ENCODE measurements at regions of chr20 and their contacts with region 1.

Region 1: GRCh38 chr20:53611449-53611894 is 17.8 kb upstream of the ZNF217 start:
- DNase-seq: peak in 2 of 14 experiments; percentile 47 to 48
- ATAC-seq: no peak
- H3K4me3 ChIP-seq: no peak overlapping the region
- H3K4me3 Mint-ChIP-seq: no peak overlapping the region
- H3K27ac ChIP-seq: peak overlapping the region in 1 of 2 donors; percentile 9
- H3K27ac Mint-ChIP-seq: peak overlapping the region; percentile 77
- H3K4me1 ChIP-seq: peaks cover 26% of the 10 kb centered on the region
- H3K4me1 Mint-ChIP-seq: peaks cover 40% of the 10 kb centered on the region
- H3K27me3 ChIP-seq: no peaks in the 10 kb centered on the region
- H3K27me3 Mint-ChIP-seq: no peaks in the 10 kb centered on the region
- CTCF ChIP-seq: no peak

Region 2: DNA sequence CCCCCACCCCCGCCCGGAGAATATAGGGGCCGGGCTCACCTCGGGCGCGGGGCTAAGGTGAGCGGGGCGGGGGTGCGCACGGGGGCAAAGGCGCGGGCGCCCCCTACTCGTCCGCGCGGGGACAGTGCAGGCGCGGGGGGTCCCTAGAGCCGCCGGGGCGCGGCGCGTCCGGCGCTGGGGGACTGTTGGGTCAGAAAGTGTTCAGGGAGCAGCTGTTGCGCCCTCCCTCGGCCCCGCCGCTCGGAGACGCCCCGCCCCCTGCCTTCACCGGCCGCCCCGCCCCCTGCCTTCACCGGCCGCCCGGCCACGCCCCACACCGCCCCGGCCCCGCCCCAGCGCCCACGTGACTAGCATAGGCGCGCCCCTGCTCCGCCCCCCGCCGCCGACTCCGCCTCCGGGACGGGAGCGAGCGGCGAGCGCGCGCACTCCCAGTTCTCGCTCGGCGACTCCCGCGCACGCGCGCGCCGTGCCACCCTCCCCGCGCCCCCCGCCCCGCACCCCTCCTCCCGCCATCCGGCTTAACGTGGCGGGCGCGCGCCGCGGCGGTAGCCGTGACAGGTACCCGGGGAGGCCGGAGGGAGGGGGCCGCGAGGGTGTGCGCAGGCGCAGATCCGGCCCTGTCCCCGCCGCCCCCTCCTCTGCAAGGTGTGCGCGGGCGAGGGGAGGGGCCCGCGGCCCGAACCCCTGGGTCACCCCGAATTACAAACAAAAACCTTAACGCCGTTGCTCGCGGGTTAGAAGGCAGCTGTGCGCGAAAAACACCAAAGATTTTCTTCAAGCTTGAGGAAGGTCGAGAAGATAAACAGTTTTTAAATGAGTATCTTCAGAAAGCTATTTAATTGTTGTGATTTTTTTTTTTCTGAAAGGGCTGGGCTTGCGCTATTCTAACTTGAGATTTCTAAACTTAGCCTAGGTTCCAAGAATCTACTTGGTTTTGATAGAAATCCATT is 17.1 kb before region 1 on chr20:
- CTCF ChIA-PET with region 1: interaction called, 3 read pairs
- POLR2A ChIA-PET with region 1: interaction called, 111 read pairs
- intact Hi-C with region 1: loop called in 1 of 2 experiments (anchors 1 kb)
- DNase-seq: peak; percentile 95 to 100 (median 98)
- ATAC-seq: peak; percentile 63
- H3K4me3 ChIP-seq: peak overlapping the region; percentile 75
- H3K4me3 Mint-ChIP-seq: peak overlapping the region; percentile 93
- H3K27ac ChIP-seq: peak overlapping the region; percentile 63 to 74
- H3K27ac Mint-ChIP-seq: peak overlapping the region; percentile 100
- H3K4me1 ChIP-seq: peaks cover 24% of the 10 kb centered on the region
- H3K4me1 Mint-ChIP-seq: peaks cover 73% of the 10 kb centered on the region
- H3K27me3 ChIP-seq: no peaks in the 10 kb centered on the region
- H3K27me3 Mint-ChIP-seq: no peaks in the 10 kb centered on the region
- CTCF ChIP-seq: no peak

Region 3: GRCh38 chr20:53643031-53643832 is 31.8 kb after region 1 on chr20:
- CTCF ChIA-PET with region 1: interaction called, 10 read pairs
- POLR2A ChIA-PET with region 1: interaction called, 61 read pairs
- intact Hi-C with region 1: loop called in 1 of 2 experiments (anchors 1 kb)
- DNase-seq: peak; percentile 54 to 88 (median 68)
- ATAC-seq: peak; percentile 96
- H3K4me3 ChIP-seq: peak overlapping the region; percentile 18
- H3K4me3 Mint-ChIP-seq: peak overlapping the region; percentile 84
- H3K27ac ChIP-seq: peak overlapping the region; percentile 83 to 85
- H3K27ac Mint-ChIP-seq: peak overlapping the region; percentile 93
- H3K4me1 ChIP-seq: peaks cover 38% of the 10 kb centered on the region
- H3K4me1 Mint-ChIP-seq: peaks cover 53% of the 10 kb centered on the region
- H3K27me3 ChIP-seq: no peaks in the 10 kb centered on the region
- H3K27me3 Mint-ChIP-seq: no peaks in the 10 kb centered on the region
- CTCF ChIP-seq: no peak

Region 4: GRCh38 chr20:53660078-53660909 is 48.8 kb after region 1 on chr20:
- CTCF ChIA-PET with region 1: interaction called, 3 read pairs
- POLR2A ChIA-PET with region 1: interaction called, 34 read pairs
- intact Hi-C with region 1: no loop called
- DNase-seq: peak in 9 of 14 experiments; percentile 11 to 50 (median 38)
- ATAC-seq: peak; percentile 41
- H3K4me3 ChIP-seq: peak overlapping the region; percentile 53
- H3K4me3 Mint-ChIP-seq: peak overlapping the region; percentile 91
- H3K27ac ChIP-seq: peak overlapping the region; percentile 49 to 66
- H3K27ac Mint-ChIP-seq: peak overlapping the region; percentile 92
- H3K4me1 ChIP-seq: peaks cover 33% of the 10 kb centered on the region
- H3K4me1 Mint-ChIP-seq: peaks cover 76% of the 10 kb centered on the region
- H3K27me3 ChIP-seq: no peaks in the 10 kb centered on the region
- H3K27me3 Mint-ChIP-seq: no peaks in the 10 kb centered on the region
- CTCF ChIP-seq: no peak

Region 5: GRCh38 chr20:53847129-53847836 is 235.8 kb after region 1 on chr20:
- CTCF ChIA-PET with region 1: interaction called, 3 read pairs
- POLR2A ChIA-PET with region 1: interaction called, 12 read pairs
- intact Hi-C with region 1: no loop called
- DNase-seq: peak in 4 of 14 experiments; percentile 28 to 73 (median 64)
- ATAC-seq: peak; percentile 41
- H3K4me3 ChIP-seq: no peak overlapping the region
- H3K4me3 Mint-ChIP-seq: peak overlapping the region; percentile 79
- H3K27ac ChIP-seq: no peak overlapping the region
- H3K27ac Mint-ChIP-seq: peak overlapping the region; percentile 83
- H3K4me1 ChIP-seq: peaks cover 54% of the 10 kb centered on the region
- H3K4me1 Mint-ChIP-seq: peaks cover 63% of the 10 kb centered on the region
- H3K27me3 ChIP-seq: no peaks in the 10 kb centered on the region
- H3K27me3 Mint-ChIP-seq: no peaks in the 10 kb centered on the region
- CTCF ChIP-seq: no peak

Region 6: DNA sequence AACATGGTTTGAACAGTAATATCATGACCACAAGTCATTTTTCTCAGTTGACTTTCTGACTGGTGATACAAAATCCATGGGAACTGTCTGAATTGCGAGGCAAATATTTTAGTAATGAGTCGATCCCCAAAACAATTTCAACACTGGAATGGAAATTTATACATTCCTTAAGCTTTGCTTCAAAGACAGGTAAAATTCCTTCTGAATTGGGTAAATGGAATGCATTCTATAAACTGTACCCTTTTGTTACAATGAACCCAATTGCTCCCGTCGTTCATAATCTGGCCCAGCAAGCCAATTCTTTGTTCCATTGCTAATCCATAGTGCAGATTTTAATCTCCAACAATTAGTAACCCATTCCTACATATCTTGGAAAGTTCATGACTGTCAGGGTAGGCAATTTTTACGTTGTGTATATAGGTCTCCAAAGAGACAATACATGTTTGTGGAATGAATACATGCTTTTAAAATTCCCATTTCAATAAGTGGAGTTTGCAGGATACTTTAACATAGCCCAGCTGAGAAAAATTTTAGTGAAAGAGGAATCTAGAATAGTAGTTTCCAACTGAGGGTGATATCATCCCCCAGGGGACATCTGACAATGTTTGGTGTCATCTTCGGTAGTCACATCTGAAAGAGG is 529.6 kb after region 1 on chr20:
- CTCF ChIA-PET with region 1: no interaction called
- POLR2A ChIA-PET with region 1: no interaction called
- intact Hi-C with region 1: no loop called
- DNase-seq: no peak
- ATAC-seq: no peak
- H3K4me3 ChIP-seq: no peak overlapping the region
- H3K4me3 Mint-ChIP-seq: no peak overlapping the region
- H3K27ac ChIP-seq: no peak overlapping the region
- H3K27ac Mint-ChIP-seq: no peak overlapping the region
- H3K4me1 ChIP-seq: no peaks in the 10 kb centered on the region
- H3K4me1 Mint-ChIP-seq: no peaks in the 10 kb centered on the region
- H3K27me3 ChIP-seq: peaks cover 0 to 5% of the 10 kb centered on the region in 2 experiments
- H3K27me3 Mint-ChIP-seq: peaks cover 26% of the 10 kb centered on the region
- CTCF ChIP-seq: no peak